Activated T-helper 1 cell treated with anti-CD3 and anti-CD28 coated beads, Interleukin-12 subunit alpha, Interleukin-12 subunit beta, Interleukin-2, Interleukin-4 antibody, amounts not matched to agents 30 ng/mL and 10 ng/mL and 1 ng/mL, durations not matched to agents 14 hours and 24 hours and 36 hours (primary cell): ENCODE measurements at regions of chrX and their contacts with region 1.

Region 1: DNA sequence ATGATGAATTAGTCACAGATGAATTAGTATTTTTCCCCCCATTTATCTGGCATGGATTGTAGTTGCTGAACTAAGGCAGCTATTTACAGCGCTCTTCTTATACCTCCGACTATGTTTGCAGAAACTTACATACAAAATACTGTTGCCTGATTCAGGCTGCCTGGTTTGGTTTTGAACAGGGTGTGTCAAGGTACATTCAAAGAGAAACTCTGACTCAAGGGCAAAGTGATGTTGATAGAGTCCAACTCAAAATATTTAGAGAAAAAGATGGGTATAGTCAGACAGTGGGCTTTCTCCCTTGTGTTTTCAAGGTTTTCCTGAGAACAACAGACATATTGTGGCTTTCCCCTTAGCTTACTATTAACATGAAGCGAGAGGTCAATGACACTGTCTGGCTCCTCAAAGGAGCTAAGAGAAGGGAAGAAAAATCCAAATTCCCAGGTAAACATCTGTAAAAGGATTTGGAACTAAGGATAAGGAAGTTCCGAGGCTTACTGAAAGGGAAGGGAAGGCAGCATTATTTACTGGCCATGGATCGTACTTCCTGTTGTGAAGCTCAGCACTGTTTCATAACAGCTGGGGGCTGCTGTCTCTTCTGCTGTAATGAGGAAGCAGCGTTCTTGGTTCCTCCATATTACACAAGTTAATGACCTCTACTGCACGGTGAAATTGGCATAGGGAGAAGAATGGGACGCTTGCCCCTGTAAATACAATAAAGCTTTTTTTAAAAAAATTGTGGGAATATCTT is 30.9 kb downstream of the FAM9C start:
- DNase-seq: no peak
- H3K4me3 Mint-ChIP-seq: peak overlapping the region; percentile 12
- H3K27ac Mint-ChIP-seq: peak overlapping the region; percentile 75
- H3K4me1 Mint-ChIP-seq: peaks cover 64% of the 10 kb centered on the region
- H3K27me3 Mint-ChIP-seq: no peaks in the 10 kb centered on the region

Region 2: DNA sequence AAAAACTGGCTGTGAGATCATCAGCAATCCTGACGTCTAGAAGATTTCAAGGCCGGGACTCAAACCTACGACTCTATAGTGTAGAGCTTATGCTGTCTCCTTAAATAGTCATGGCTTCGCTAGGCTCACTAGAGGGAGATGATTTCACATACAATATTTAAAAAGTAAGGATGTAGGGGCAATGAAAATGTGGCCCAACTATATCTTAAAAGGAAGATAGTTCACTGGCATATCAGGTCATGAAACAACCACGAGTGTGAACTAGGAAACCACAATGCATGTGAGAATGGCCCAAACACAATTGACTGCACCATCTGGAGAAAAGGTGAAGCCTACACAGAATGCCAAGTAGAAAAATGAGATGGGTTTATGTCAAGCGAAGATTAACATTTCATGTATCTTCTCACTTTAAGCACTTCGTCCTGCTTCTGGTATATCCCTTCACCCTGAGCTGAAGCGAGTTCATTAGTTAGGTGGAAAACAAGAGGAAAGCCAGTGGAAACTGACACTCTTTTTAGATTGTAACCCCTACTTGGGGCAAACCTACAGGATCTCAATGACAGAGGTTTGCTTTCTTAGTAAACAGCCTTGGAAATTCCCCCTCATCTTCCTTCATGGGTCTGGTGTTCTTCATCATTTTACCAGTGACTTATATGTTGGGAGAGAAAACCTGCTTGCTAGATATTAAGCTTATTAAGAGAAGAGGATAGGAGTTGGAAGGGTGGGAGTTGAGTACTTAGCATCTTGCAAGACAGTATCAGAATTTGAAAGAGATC is 13.5 kb after region 1 on chrX:
- intact Hi-C with region 1: loop called (anchors 2 kb)
- DNase-seq: no peak
- H3K4me3 Mint-ChIP-seq: peak overlapping the region; percentile 15
- H3K27ac Mint-ChIP-seq: peak overlapping the region; percentile 82
- H3K4me1 Mint-ChIP-seq: peaks cover 75% of the 10 kb centered on the region
- H3K27me3 Mint-ChIP-seq: no peaks in the 10 kb centered on the region

Region 3: DNA sequence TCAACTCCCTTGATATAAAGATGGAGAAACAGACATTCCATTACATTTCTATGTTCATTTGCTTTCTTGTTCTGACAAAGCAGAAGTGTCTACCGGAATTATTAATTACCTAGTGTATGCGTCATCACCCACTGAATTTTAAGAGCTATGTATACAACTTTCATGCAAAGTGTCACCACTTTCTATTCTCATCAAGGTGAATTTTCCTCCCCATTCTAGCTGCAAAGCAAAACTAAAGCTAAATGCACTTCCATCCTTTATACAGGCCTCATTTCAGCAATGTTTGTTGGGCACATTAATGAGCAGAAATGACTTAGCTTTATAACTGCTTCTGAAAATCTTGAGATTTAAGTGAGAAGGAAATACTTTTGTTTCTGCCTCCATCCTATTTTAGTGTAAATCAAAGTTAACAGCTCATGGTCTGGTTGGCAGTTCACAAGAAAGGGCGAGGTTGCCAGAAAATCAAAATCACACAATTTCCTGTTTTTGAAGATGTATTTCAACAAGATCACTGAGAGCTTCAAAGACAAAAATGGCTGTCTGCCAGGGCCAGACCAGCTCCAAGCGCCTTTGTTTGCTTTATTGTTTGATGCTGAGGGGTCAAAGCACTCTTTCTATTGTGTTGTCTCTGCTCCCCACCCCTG is 38.1 kb after region 1 on chrX:
- intact Hi-C with region 1: loop called (anchors 1 kb)
- DNase-seq: no peak
- H3K4me3 Mint-ChIP-seq: peak overlapping the region; percentile 37
- H3K27ac Mint-ChIP-seq: peak overlapping the region; percentile 89
- H3K4me1 Mint-ChIP-seq: peaks cover 65% of the 10 kb centered on the region
- H3K27me3 Mint-ChIP-seq: peaks cover 1% of the 10 kb centered on the region